Pancreas (tissue), 10 donors: ENCODE measurements at regions of chr15 and their contacts with region 1.

Region 1: DNA sequence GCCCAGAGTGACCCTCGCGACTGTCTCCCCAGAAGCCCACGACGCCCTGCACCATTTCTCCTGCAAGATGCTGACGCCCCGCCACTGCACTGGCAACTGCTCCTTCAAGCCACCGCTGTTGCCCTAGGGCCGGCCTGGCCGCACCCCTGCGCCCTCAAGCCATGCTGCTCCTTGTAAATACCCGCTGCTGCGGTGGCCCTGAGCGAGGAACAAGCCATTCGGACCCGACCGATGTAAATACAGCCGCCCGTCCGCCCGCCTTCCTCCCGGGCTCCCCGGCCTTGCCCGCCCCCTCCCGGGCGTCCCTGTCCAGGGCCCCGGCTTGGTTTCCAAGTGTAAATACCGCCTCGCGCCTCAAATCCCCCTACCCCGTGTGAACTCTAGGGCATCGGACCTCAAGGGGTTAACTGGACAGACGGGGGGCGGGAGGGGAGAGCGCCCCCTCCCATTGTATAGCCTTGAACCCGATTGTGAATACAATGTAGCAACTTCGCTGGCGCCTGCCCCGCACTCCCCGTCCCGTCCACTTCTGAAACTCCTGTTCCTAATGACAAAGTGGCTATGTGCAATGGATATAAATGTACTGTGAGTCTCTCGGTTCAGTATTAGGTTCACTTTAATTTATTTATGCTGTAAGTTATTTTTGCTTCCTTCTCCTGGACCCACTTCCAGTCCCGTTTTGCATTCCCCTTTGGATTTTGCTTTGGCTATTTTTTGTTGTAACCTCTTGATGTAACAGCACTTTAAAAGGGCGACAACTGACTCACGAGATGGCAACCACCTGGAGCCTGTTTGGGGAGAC is 5.9 kb downstream of the RNU6-1 start:
- DNase-seq: peak in 2 of 6 donors; percentile 78 to 82
- ATAC-seq: peak; percentile 38 to 62 (median 56)
- H3K4me3 ChIP-seq: peak overlapping the region in 2 of 4 donors; percentile 21 to 43
- H3K27ac ChIP-seq: no peak overlapping the region
- H3K4me1 ChIP-seq: peaks cover 0 to 11% (median 8%) of the 10 kb centered on the region in 3 donors
- H3K27me3 ChIP-seq: peaks cover 0 to 28% (median 1%) of the 10 kb centered on the region in 4 donors
- CTCF ChIP-seq: peak in 2 of 4 donors; percentile 18 to 31

Region 2: DNA sequence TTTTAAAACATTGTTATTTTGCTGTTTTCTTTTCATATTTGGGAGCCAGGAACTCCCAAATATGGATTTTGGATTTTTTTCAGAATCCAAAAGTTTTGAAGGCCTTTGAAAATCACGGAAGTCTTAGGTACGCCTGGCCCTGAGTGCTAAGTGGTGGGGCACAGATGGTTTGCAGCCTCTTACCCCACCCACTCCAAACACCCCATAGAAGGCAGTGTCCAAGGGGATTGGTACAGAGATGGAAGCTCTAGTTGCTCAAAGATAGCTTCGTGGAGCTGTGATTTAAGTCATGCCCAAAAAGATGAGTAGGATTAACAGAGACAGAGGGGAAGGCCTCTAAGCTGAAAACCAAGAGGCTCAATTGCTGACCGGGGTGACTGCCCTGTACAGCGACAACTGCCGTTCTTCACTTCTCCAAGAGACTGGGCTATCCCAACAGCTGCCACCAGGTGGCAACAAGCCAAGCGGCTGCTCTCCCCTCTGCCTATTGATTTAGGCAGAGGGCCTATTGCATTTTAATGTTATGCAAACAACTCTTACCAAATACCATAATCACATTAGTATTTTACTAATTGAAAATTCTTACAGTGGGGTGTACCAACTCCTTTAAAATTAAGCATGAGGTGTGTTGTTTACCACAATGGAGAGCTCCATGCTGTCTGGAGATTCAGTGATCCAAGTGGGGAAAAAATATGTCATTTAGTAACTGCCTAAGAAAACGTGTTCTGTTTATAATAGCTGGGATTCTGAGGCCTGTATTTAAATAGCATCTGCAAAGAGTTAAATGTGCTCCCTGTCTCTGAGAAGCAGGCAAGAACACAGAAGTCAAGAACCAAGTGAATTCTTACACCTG is 377.0 kb before region 1 on chr15:
- intact Hi-C with region 1: loop called in 2 of 3 experiments (anchors 5 to 10 kb)
- DNase-seq: peak; percentile 71 to 95 (median 86)
- ATAC-seq: peak; percentile 96 to 99 (median 98)
- H3K4me3 ChIP-seq: no peak overlapping the region
- H3K27ac ChIP-seq: no peak overlapping the region
- H3K4me1 ChIP-seq: peaks cover 0 to 5% (median 0%) of the 10 kb centered on the region in 3 donors
- H3K27me3 ChIP-seq: no peaks in the 10 kb centered on the region
- CTCF ChIP-seq: peak; percentile 75 to 76 (median 76)